H1 (cell line): ENCODE measurements at regions of chr2 and their contacts with region 1.

Region 1: GRCh38 chr2:88159955-88160415 is 10.2 kb upstream of the THNSL2 start:
- DNase-seq: no peak
- H3K4me3 ChIP-seq: no peak overlapping the region
- H3K27ac ChIP-seq: no peak overlapping the region
- H3K4me1 ChIP-seq: peaks cover 0 to 6% (median 0%) of the 10 kb centered on the region in 4 experiments; a peak in 2 of 7 replicates
- H3K27me3 ChIP-seq: no peaks in the 10 kb centered on the region
- CTCF ChIP-seq: peak in 2 of 3 experiments; percentile 78 to 85; a peak in 3 of 4 replicates
- EP300 ChIP-seq: no peak
- POLR2A ChIP-seq: no peak
- RAD21 ChIP-seq: peak; percentile 94 to 97

Region 2: DNA sequence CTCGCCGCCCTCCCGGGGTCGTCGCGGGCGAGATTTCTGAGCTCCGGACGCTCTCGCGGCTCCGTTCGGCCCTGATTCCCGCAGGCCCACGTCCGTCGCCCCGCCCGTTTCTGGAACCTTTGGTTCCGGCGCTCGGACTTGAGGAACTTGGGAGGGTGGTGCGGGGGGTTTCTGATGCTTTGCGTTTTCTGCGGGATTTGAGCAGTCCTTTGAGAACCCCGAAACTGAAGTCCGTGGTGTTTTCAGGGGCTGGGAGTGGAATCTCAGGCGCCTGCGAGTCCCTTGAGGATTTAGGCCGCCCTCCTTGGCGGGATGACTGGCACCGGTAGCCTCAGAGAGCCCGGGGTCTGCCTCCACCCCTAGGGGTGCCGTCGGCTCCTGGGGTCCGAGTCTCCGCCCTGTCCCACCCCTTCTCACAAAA is 10.5 kb after region 1 on chr2:
- CTCF ChIA-PET with region 1: interaction called, 11 read pairs
- POLR2A ChIA-PET with region 1: interaction called, 3 read pairs
- DNase-seq: peak in 1 of 2 experiments; percentile 65
- H3K4me3 ChIP-seq: peak overlapping the region; percentile 62 to 83 (median 68)
- H3K27ac ChIP-seq: no peak overlapping the region; the same call in 1 of the 2 replicates
- H3K4me1 ChIP-seq: peaks cover 0 to 2% (median 0%) of the 10 kb centered on the region in 4 experiments; a peak in 3 of 7 replicates
- H3K27me3 ChIP-seq: 0 out of 7 replicates have a peak, but pooled peaks cover 0 to 2% (median 0%) of the 10 kb centered on the region in 4 experiments
- CTCF ChIP-seq: no peak
- EP300 ChIP-seq: no peak
- POLR2A ChIP-seq: peak in 1 of 2 experiments; percentile 53; a peak in 1 of 3 replicates
- RAD21 ChIP-seq: no peak